ENCODE measurements at regions of chr1 and their contacts with region 1.

Region 1: GRCh38 chr1:31564134-31564989 is 12.0 kb upstream of the TINAGL1 start:
- H3K4me3 ChIP-seq: no peak overlapping the region
- H3K27ac ChIP-seq: no peak overlapping the region
- H3K4me1 ChIP-seq: no peaks in the 10 kb centered on the region
- CTCF ChIP-seq: no peak

Region 2: DNA sequence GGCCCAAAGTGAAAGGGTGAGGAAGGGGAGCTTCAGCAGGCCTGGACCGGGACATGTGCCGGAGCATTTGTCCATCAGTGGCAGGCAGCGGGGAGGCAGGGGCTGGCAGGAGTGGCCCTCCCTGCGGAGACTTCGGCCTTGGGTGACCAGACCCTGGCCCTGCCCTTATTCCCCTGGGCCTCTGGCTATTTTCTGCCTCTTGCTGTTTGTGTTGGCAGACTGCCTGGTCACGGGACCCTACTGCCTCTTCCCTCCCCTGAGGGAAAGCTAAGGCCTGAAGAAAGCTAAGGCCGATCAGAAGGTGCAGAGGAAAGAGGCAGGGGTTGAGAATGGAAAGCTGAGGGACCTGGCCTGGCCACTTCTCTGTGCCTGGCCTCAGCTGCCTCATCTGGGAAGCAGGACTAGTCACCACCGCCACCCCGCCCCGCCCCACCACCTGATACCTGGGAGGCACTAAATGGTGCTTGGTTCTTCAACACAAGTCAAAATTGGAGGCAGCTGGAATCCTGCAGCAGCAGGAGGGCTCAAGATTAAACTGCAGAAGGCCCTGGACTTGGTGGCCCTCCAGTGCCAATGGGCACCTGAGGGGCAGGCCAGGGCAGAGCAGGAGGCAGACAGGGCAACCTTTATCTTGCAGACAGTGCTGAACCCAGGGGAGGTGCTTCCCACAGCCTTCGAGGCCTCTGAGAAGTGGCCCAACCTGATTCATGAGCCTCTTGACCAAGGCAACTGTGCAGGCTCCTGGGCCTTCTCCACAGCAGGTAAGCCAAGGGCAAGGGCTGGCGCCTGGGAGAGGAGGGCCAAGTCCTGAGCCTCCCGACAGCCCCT is 19.9 kb after region 1 on chr1:
- CTCF ChIA-PET with region 1: interaction called, 12 read pairs
- POLR2A ChIA-PET with region 1: no interaction called
- H3K4me3 ChIP-seq: no peak overlapping the region
- H3K27ac ChIP-seq: no peak overlapping the region
- H3K4me1 ChIP-seq: no peaks in the 10 kb centered on the region
- CTCF ChIP-seq: no peak

Region 3: GRCh38 chr1:31723828-31724359 is 159.5 kb after region 1 on chr1:
- CTCF ChIA-PET with region 1: no interaction called
- POLR2A ChIA-PET with region 1: no interaction called
- H3K4me3 ChIP-seq: no peak overlapping the region
- H3K27ac ChIP-seq: no peak overlapping the region
- H3K4me1 ChIP-seq: no peaks in the 10 kb centered on the region
- CTCF ChIP-seq: no peak